ENCODE measurements at regions of chrX and their contacts with region 1.

Region 1: DNA sequence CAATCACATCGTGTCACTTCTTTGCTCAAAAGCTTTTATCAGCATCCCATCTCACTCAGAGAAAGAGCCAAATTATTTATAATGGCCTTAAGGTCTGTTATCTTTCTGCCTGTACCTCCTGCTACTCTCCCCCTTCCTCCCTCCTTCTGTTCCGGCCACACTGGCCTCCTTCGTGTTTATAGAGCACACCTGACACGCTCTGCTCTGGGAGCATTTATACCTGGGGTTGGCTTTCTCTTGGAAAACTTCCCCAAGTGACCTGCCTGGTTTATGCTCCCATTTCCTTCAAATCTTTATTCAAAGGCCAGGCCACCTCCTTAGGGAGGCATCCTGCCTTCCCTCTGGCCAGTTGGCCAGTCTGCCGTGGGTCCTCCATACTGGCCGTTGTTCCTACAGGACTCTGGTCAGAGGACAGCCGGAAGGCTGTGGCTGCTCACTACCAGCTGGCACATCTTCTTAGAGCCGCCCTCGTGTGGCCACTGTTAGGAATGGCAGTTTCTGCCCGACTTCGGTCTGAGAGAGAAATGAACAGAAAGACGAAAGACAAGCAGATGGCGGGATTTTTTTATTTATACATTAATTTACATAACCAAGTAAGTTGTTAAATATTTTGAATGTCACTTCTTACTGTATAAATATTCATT is 80.2 kb upstream of the CBLL2 start:
- DNase-seq: peak; percentile 77
- ATAC-seq: peak; percentile 52

Region 2: DNA sequence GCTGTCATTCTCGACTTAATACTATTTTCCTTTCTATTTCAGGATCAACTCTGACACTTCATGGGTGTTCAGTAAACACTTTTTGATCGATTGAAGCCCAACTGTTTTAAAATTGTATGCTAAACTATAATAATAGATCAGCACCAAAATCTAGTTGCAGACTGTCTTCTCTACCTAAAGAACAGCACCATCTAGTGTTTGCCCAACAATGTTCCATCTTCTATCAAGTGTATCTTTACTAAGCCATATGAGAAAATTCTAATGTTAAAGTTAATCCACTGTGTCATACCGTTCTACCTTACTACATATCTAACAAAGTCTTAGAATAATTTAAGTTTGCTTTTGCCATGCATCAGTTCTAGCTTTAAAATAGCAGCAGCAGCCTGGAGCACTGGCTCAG is 1361.8 kb after region 1 on chrX:
- intact Hi-C with region 1: loop called (anchors 10 kb)
- DNase-seq: no peak
- ATAC-seq: no peak